T-cell (primary cell): ENCODE measurements at regions of chr13 and their contacts with region 1.

Region 1: DNA sequence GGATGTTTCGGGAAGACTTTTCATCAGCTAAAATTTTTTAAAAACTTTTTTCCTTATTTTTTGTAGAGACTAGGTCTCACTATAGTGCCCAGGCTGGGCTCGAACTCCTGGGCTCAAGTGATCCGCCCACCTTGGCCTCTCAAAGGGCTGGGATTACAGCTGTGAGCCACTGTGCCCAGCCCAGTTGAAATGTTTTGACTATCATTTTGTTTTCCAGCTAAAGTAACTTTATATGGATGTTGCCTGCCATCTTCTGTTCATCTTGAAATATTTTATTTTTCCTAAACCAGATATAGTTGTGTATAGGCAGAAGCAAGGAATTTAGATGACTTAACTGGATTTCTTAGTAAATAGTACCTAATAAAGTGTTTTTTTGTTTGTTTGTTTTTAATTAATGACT is 7.0 kb downstream of the CAB39L start:
- DNase-seq: no peak
- ATAC-seq: no peak
- H3K4me3 ChIP-seq: no peak overlapping the region
- H3K4me3 Mint-ChIP-seq: no peak overlapping the region
- H3K27ac ChIP-seq: no peak overlapping the region
- H3K27ac Mint-ChIP-seq: no peak overlapping the region
- H3K4me1 ChIP-seq: no peaks in the 10 kb centered on the region
- H3K4me1 Mint-ChIP-seq: peaks cover 0 to 9% (median under 1%) of the 10 kb centered on the region in 3 donors
- H3K27me3 ChIP-seq: no peaks in the 10 kb centered on the region
- H3K27me3 Mint-ChIP-seq: no peaks in the 10 kb centered on the region

Region 2: DNA sequence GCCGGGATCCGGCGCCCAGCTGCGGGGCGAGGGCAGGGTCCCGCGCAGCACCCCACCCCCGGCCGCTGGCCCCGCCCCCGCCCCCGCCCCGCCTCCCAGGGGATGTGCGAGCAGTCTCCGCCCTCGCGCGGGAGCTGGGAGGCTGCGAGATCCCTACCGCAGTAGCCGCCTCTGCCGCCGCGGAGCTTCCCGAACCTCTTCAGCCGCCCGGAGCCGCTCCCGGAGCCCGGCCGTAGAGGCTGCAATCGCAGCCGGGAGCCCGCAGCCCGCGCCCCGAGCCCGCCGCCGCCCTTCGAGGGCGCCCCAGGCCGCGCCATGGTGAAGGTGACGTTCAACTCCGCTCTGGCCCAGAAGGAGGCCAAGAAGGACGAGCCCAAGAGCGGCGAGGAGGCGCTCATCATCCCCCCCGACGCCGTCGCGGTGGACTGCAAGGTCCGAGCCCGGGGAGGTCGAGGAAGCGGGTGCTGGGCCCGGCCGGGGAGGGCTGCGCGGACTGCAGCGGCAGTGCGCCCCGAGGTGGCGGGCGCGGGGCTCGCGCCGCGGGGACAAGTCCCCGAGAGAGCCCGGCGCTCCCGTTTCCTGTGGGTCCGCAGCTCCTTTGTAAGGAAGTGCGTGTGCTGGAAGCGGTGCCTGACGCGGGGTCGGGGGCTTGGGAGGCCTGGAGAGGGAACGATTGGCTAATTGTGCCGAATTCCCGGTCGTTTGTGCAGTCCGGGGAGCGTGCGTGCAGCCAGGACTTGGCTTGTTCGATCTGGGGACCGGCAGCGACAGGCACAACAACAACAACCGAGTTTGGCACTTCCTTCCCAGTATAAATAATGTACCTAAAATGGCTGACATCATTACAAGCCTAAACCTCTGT is 1203.6 kb before region 1 on chr13 and contains the start of gene ITM2B:
- CTCF ChIA-PET with region 1: interaction called in 1 of 2 experiments, 16 read pairs
- POLR2A ChIA-PET with region 1: no interaction called
- DNase-seq: peak; percentile 34 to 81 (median 56)
- ATAC-seq: peak; percentile 83 to 88 (median 84)
- H3K4me3 ChIP-seq: peak within 1 kb of the TSS; percentile 82 to 100
- H3K4me3 Mint-ChIP-seq: peak within 1 kb of the TSS; percentile 88 to 96 (median 95)
- H3K27ac ChIP-seq: peak within 1 kb of the TSS; percentile 85
- H3K27ac Mint-ChIP-seq: peak within 1 kb of the TSS; percentile 98
- H3K4me1 ChIP-seq: peaks cover 21 to 30% of the 10 kb centered on the region in 2 experiments
- H3K4me1 Mint-ChIP-seq: peaks cover 49 to 59% (median 55%) of the 10 kb centered on the region in 3 donors
- H3K27me3 ChIP-seq: no peaks in the 10 kb centered on the region
- H3K27me3 Mint-ChIP-seq: no peaks in the 10 kb centered on the region
- total RNA-seq, gene ITM2B: 347 to 539 (median 452) TPM